HepG2 (cell line): ENCODE measurements at regions of chr3 and their contacts with region 1.

Region 1: DNA sequence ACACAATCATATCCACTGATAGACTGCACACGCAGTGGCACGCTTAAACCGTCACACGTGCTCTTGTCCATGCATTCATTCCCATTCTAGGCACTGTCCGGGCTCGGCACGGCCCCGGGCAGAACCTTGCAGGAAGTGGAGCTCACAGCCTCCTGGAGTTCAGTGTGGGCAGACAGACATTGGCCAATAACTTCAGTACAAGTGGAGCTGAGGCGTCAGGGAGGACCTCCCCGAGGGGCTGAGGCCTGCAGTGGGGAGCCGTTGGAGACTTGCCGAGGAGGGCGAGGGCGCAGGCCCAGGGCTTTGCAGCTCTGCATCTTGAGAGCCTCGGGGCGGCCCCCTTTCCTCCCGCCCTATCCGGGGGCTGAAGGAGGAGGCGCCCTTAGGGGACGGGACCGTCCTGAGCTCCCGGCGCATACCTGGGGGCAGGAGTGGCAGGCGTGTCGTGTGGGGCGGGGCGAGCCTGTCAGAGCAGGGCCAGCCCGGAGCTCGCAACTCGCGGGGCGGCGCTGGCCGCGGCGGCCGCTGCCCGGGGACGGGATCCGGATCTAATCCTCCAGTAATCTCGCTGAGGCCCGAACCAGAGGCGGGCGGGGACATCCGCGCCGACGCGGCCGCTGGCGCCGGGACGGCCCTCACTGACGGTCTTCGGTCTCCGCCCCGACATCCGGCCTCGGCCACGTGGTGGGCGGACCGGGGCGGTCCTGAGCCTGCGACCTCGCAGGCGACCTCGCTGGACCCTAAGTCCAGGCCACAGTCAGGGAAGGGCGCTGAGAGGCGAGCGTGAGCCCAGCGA is at the start of gene ACY1:
- DNase-seq: peak; percentile 87
- ATAC-seq: peak; percentile 80
- H3K4me3 ChIP-seq: peak within 1 kb of the TSS; percentile 70 to 83 (median 73)
- H3K27ac ChIP-seq: peak within 1 kb of the TSS; percentile 94
- H3K4me1 ChIP-seq: peaks cover 51% of the 10 kb centered on the region
- H3K27me3 ChIP-seq: no peaks in the 10 kb centered on the region
- CTCF ChIP-seq: peak; percentile 3; the same call in 1 of the 2 replicates
- EP300 ChIP-seq: peak; percentile 19 to 73; a peak in 3 of 4 replicates
- POLR2A ChIP-seq: no peak; a peak in 1 of 4 replicates
- RAD21 ChIP-seq: 0 out of 2 replicates have a peak, but pooled peaks have one; percentile 3
- total RNA-seq, gene ACY1: 112 and 113 TPM in 2 replicates

Region 2: DNA sequence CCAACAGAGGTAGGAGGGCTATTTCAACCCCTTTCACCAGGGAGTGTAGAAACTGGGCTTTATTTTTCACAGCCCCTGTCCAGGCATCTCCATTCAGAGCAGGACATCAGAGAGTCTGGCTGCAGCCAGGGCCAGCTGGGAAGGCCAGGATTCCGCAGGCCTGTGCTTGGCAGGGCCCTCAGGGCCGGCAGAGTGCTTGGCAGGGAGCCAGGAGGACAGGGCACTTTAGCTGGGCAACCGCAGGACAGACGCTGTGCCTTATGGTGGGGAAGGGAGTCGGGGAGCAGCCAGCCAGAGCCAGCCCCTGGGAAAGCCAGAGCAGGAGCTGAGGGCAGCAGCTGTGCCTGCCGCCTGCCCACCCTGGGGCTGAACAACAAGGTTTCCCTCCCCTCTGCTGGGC is 169.4 kb before region 1 on chr3:
- CTCF ChIA-PET with region 1: no interaction called
- POLR2A ChIA-PET with region 1: no interaction called
- in situ Hi-C with region 1: no loop called
- intact Hi-C with region 1: no loop called
- DNase-seq: no peak
- ATAC-seq: no peak
- H3K4me3 ChIP-seq: no peak overlapping the region
- H3K27ac ChIP-seq: no peak overlapping the region
- H3K4me1 ChIP-seq: no peaks in the 10 kb centered on the region
- H3K27me3 ChIP-seq: peaks cover 0 to 14% of the 10 kb centered on the region in 2 experiments; a peak in 3 of 5 replicates
- CTCF ChIP-seq: no peak
- EP300 ChIP-seq: no peak
- POLR2A ChIP-seq: no peak
- RAD21 ChIP-seq: no peak

Region 3: GRCh38 chr3:51874889-51875288 is 108.1 kb before region 1 on chr3:
- CTCF ChIA-PET with region 1: no interaction called
- POLR2A ChIA-PET with region 1: no interaction called
- in situ Hi-C with region 1: no loop called
- intact Hi-C with region 1: no loop called
- DNase-seq: no peak
- ATAC-seq: no peak
- H3K4me3 ChIP-seq: no peak overlapping the region
- H3K27ac ChIP-seq: no peak overlapping the region
- H3K4me1 ChIP-seq: no peaks in the 10 kb centered on the region
- H3K27me3 ChIP-seq: peaks cover 1 to 26% of the 10 kb centered on the region in 2 experiments; a peak in 2 of 5 replicates
- CTCF ChIP-seq: no peak
- EP300 ChIP-seq: no peak
- POLR2A ChIP-seq: no peak
- RAD21 ChIP-seq: no peak

Region 4: DNA sequence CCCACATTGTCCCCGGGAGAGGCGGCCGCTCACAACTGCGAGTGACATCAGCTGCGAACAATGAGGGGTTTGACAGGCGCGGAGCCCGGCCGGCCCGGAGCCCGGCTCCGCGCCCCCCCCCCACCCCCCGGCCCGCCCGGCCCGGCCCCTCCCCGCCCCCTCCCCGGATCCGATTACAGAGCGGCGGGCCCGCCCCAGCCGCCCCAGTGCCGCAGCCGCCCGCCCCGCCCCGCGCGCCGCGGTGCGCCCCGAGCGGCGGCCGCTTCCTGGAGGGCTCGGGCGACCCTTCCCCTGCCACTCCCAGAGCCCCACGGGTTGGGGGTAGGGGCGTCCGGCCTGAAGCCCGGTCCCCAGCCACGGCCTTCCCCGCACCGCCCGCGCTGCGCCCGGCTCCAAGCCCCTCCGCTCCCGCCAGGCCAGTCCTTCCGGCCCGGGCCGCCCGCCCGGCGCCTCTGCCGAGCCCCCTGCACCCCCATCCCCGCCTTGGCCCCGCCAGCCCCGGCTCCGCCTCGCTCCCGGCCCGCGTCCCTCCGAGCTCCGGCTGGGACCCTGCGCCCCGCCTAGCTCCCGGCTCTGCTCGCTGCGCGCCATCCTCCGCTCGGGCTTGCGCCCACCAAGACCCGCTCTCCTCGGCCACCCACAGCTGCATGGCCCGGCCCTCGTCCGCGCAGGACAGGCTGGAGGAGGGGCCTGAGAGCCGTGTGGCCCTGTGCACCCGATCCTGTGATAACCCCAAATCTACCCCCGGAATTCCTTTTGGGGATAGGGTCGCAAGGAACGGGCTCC is 15.4 kb before region 1 on chr3 and contains the start of gene PCBP4:
- CTCF ChIA-PET with region 1: no interaction called
- POLR2A ChIA-PET with region 1: interaction called, 114 read pairs
- in situ Hi-C with region 1: no loop called
- intact Hi-C with region 1: no loop called
- DNase-seq: peak; percentile 70
- ATAC-seq: peak; percentile 76
- H3K4me3 ChIP-seq: peak within 1 kb of the TSS; percentile 72 to 89 (median 87)
- H3K27ac ChIP-seq: peak within 1 kb of the TSS; percentile 81
- H3K4me1 ChIP-seq: peaks cover 89% of the 10 kb centered on the region
- H3K27me3 ChIP-seq: no peaks in the 10 kb centered on the region
- CTCF ChIP-seq: no peak
- EP300 ChIP-seq: no peak
- POLR2A ChIP-seq: peak in 1 of 2 experiments; percentile 41; a peak in 1 of 4 replicates
- RAD21 ChIP-seq: no peak; the same call in 1 of the 2 replicates
- total RNA-seq, gene PCBP4: 32.5 and 36.8 TPM in 2 replicates